PC-3 (cell line): ENCODE measurements at regions of chr16 and their contacts with region 1.

Region 1: DNA sequence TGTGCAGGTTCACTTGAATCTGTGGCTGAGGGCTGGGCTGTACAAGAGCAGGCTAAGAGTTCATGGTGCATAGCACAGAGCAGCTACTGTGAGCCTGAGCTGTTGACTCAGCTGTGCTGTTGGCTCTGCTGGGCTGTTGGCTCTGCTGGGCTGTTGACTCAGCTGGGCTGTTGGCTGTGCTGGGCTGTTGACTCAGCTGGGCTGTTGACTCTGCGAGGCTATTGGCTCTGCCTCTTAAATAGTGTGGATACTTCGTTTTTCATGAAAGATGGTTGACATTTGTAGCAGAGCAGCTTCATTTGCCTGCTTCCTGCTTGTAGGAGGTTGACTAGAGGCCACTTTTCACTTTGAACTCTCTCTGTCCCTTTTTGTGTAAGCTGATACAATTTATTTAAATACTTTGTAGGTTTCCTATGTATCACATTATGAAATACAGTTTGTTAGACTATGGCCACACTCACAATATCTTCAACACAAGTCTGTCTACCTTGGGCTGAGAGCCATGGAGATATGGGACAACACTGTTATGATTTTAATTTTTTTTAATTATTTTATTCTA is 40.3 kb upstream of the CCNF start:
- DNase-seq: peak; percentile 84
- ATAC-seq: peak; percentile 96
- H3K4me3 ChIP-seq: no peak overlapping the region
- H3K27ac ChIP-seq: no peak overlapping the region
- H3K4me1 ChIP-seq: peaks cover 10% of the 10 kb centered on the region
- H3K27me3 ChIP-seq: no peaks in the 10 kb centered on the region
- CTCF ChIP-seq: no peak

Region 2: GRCh38 chr16:2340564-2341455 is 48.1 kb before region 1 on chr16 and contains the start of gene ABCA3:
- CTCF ChIA-PET with region 1: no interaction called
- POLR2A ChIA-PET with region 1: no interaction called
- intact Hi-C with region 1: loop called (anchors 5 kb)
- DNase-seq: peak; percentile 94
- ATAC-seq: peak; percentile 89
- H3K4me3 ChIP-seq: peak within 1 kb of the TSS; percentile 81
- H3K27ac ChIP-seq: no peak within 1 kb of the TSS
- H3K4me1 ChIP-seq: 0 out of 2 replicates have a peak, but pooled peaks cover 3% of the 10 kb centered on the region
- H3K27me3 ChIP-seq: no peaks in the 10 kb centered on the region
- CTCF ChIP-seq: peak; percentile 89
- total RNA-seq, gene ABCA3: 11.0 and 15.5 TPM in 2 replicates

Region 3: GRCh38 chr16:2424061-2425003 is 35.4 kb after region 1 on chr16:
- CTCF ChIA-PET with region 1: no interaction called
- POLR2A ChIA-PET with region 1: no interaction called
- intact Hi-C with region 1: no loop called
- DNase-seq: no peak
- ATAC-seq: no peak
- H3K4me3 ChIP-seq: no peak overlapping the region
- H3K27ac ChIP-seq: no peak overlapping the region
- H3K4me1 ChIP-seq: 0 out of 2 replicates have a peak, but pooled peaks cover 4% of the 10 kb centered on the region
- H3K27me3 ChIP-seq: no peaks in the 10 kb centered on the region
- CTCF ChIP-seq: no peak

Region 4: GRCh38 chr16:2883027-2883851 is 494.3 kb after region 1 on chr16 and contains the start of gene FLYWCH2:
- CTCF ChIA-PET with region 1: interaction called, 11 read pairs
- POLR2A ChIA-PET with region 1: no interaction called
- intact Hi-C with region 1: no loop called
- DNase-seq: peak; percentile 92
- ATAC-seq: peak; percentile 68
- H3K4me3 ChIP-seq: peak within 1 kb of the TSS; percentile 90
- H3K27ac ChIP-seq: peak within 1 kb of the TSS; percentile 67
- H3K4me1 ChIP-seq: peaks cover 5% of the 10 kb centered on the region; the same call in 1 of the 2 replicates
- H3K27me3 ChIP-seq: no peaks in the 10 kb centered on the region
- CTCF ChIP-seq: no peak
- total RNA-seq, gene FLYWCH2: 92.0 and 100 TPM in 2 replicates